ENCODE measurements at regions of chr1 and their contacts with region 1.

Region 1: DNA sequence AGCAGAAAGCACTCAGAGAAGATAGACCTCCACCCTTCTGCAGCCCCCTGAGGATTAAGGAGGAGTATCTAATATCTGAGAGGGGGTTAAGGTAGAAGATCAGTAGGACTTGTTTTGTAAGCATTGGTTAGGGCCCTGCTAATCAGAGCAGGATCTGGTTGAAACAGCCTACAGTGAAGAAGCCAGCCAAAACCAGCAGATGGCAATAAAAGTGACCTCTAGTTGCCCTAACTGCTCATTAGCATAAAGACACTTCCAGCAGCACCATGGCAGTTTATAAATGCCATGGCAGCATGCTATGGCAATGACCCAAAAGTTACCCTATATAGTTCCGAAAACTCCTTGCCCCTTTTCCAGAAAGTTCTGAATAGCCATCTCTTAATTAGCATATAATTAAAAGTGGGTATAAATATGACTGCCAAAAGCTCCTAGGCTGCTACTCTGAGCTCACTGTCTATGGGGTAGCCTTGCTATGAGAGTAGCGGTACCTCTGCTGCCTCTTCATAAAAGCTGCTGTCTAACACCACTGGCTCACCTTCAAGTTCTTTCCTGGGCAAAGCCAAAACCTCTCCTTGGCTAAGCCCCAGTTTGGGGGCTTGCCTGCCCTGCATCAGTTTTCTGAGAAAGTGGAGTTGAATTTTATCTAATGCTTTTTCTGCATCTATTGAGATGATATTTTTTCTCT is 254.2 kb downstream of the PAPPA2 start:
- DNase-seq: no peak
- ATAC-seq: no peak
- H3K4me3 ChIP-seq: no peak overlapping the region
- H3K27ac ChIP-seq: no peak overlapping the region
- H3K4me1 ChIP-seq: no peaks in the 10 kb centered on the region; the same call in 1 of the 2 replicates
- H3K27me3 ChIP-seq: no peaks in the 10 kb centered on the region; the same call in 1 of the 2 replicates
- CTCF ChIP-seq: no peak

Region 2: DNA sequence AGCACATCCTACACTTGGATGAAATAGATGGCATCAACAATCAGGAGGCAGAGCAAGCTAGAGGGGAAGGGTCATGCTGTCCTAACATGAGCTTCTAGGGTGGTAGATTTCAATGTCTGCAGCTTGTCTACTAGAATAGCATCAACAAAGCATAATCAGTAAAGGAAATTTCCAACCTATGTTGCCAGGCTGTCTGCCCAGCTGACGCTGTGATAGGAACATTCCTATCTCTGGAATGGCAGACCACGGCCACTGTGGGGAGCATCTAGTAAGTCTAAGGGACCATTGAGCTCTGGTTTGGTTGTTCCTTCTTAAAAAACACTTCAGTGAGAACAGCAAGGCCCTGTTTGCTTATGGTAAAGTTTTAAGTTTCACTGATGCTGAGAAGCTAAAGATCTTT is 47.4 kb before region 1 on chr1:
- CTCF ChIA-PET with region 1: no interaction called
- POLR2A ChIA-PET with region 1: no interaction called
- in situ Hi-C with region 1: no loop called
- intact Hi-C with region 1: no loop called
- DNase-seq: no peak
- ATAC-seq: no peak
- H3K4me3 ChIP-seq: no peak overlapping the region
- H3K27ac ChIP-seq: no peak overlapping the region
- H3K4me1 ChIP-seq: no peaks in the 10 kb centered on the region
- H3K27me3 ChIP-seq: no peaks in the 10 kb centered on the region
- CTCF ChIP-seq: no peak

Region 3: GRCh38 chr1:176790786-176791185 is 73.6 kb after region 1 on chr1:
- CTCF ChIA-PET with region 1: no interaction called
- POLR2A ChIA-PET with region 1: interaction called, 18 read pairs
- in situ Hi-C with region 1: no loop called
- intact Hi-C with region 1: no loop called
- DNase-seq: no peak
- ATAC-seq: no peak
- H3K4me3 ChIP-seq: no peak overlapping the region
- H3K27ac ChIP-seq: no peak overlapping the region
- H3K4me1 ChIP-seq: no peaks in the 10 kb centered on the region
- H3K27me3 ChIP-seq: no peaks in the 10 kb centered on the region
- CTCF ChIP-seq: no peak

Measured in Panc1 (cell line).